ENCODE measurements at regions of chr13 and their contacts with region 1.

Region 1: GRCh38 chr13:41193919-41194824 is at the start of gene KBTBD7:
- DNase-seq: peak; percentile 84
- H3K4me3 Mint-ChIP-seq: peak within 1 kb of the TSS; percentile 81
- H3K27ac Mint-ChIP-seq: peak within 1 kb of the TSS; percentile 83
- H3K4me1 Mint-ChIP-seq: peaks cover 10% of the 10 kb centered on the region
- H3K27me3 Mint-ChIP-seq: no peaks in the 10 kb centered on the region
- CTCF ChIP-seq: no peak
- total RNA-seq, gene KBTBD7: 1.4 and 1.8 TPM in 2 replicates

Region 2: GRCh38 chr13:41075034-41075433 is 119.1 kb before region 1 on chr13:
- CTCF ChIA-PET with region 1: interaction called, 11 read pairs
- POLR2A ChIA-PET with region 1: no interaction called
- intact Hi-C with region 1: loop called (anchors 1 kb)
- DNase-seq: peak; percentile 53
- H3K4me3 Mint-ChIP-seq: no peak overlapping the region
- H3K27ac Mint-ChIP-seq: no peak overlapping the region
- H3K4me1 Mint-ChIP-seq: no peaks in the 10 kb centered on the region
- H3K27me3 Mint-ChIP-seq: no peaks in the 10 kb centered on the region
- CTCF ChIP-seq: peak; percentile 57

Region 3: DNA sequence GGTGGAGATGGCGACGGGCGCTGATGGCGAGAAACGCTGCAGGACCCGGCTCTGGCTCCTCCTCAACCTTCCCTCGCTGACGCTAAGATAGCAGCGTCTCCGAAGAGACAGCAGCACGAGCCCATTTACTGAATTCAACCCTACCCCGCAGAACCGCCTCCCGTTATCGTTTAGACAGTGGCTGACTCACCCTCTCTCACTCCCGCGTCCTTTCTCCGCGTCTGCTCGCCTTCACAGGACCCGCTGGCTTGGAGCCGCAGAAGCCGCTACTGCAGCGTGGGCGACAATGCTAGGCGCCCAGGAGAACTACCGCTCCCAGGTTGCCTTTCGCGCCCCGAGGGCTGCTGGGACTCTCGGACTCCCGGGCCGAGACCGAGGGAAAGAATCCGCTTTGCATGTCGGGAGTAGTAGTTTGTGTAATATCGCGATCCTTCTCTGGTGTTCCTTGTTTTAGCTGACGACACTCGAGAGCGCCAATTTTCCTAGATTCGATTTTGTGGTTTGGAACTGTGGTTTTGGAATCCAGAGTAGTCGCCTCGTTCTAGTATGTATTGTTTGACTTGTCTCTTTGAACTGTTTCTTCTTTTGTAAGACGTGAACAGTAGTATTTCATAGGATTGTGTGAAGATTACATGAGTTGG is 61.5 kb before region 1 on chr13 and contains the start of gene KBTBD6:
- CTCF ChIA-PET with region 1: interaction called, 4 read pairs
- POLR2A ChIA-PET with region 1: interaction called, 9 read pairs
- intact Hi-C with region 1: loop called (anchors 1 kb)
- DNase-seq: peak; percentile 99
- H3K4me3 Mint-ChIP-seq: peak within 1 kb of the TSS; percentile 96
- H3K27ac Mint-ChIP-seq: peak within 1 kb of the TSS; percentile 96
- H3K4me1 Mint-ChIP-seq: peaks cover 41% of the 10 kb centered on the region
- H3K27me3 Mint-ChIP-seq: no peaks in the 10 kb centered on the region
- CTCF ChIP-seq: no peak
- total RNA-seq, gene KBTBD6: 8.1 and 8.2 TPM in 2 replicates